ENCODE measurements at regions of chr7 and their contacts with region 1.

Region 1: GRCh38 chr7:79837915-79838314 is 296.7 kb upstream of the GNAI1 start:
- DNase-seq: no peak
- H3K4me3 Mint-ChIP-seq: no peak overlapping the region
- H3K27ac Mint-ChIP-seq: no peak overlapping the region
- H3K4me1 Mint-ChIP-seq: no peaks in the 10 kb centered on the region
- H3K27me3 Mint-ChIP-seq: no peaks in the 10 kb centered on the region

Region 2: DNA sequence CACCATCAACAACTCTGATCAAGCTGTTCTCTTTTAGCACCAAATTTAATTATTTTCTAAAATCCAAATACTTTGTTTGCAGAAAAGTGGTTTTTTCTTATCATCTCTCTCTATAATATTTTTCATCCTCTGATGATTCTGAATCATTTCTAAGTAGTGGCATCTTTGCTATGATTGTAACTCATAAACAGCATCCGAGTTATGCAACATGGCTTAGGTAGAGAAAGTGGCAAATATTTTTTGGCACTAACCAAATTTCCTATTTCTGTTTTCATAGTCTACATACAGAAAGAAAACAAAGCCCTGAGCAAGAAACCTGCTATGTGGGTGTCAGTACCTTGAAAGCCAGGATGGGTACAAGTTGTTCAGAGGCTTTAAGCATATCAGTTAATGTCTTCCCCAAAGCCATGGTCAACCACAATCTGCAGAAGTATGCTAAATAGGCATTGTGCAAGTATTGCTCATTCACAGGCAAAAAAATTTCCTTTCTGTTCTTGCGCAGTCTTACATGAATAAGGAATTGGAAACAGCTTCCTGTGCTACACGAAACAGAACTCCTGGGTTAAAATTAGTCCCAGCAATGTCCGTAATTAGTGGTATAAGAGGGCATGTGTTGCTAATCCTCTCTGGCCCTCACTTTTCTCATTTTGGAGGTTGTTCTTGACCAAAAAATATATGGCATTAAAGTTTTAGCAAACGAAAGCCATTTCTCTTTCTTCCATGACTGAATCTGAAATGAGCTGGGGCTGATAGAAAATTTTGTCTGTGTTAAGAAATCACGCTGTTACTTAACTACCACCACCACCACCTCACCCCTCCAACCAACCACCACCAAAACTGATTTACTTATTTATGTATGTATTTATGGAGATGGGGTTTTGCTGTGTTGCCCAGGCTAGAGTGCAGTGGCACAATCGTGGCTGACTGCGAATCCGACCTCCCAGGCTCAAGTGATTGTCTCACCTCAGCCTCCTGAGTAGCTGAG is 58.8 kb before region 1 on chr7:
- intact Hi-C with region 1: no loop called
- DNase-seq: no peak
- H3K4me3 Mint-ChIP-seq: no peak overlapping the region
- H3K27ac Mint-ChIP-seq: no peak overlapping the region
- H3K4me1 Mint-ChIP-seq: no peaks in the 10 kb centered on the region
- H3K27me3 Mint-ChIP-seq: no peaks in the 10 kb centered on the region

Region 3: GRCh38 chr7:79854621-79855020 is 16.7 kb after region 1 on chr7:
- intact Hi-C with region 1: loop called (anchors 1 kb)
- DNase-seq: no peak
- H3K4me3 Mint-ChIP-seq: no peak overlapping the region
- H3K27ac Mint-ChIP-seq: no peak overlapping the region
- H3K4me1 Mint-ChIP-seq: no peaks in the 10 kb centered on the region
- H3K27me3 Mint-ChIP-seq: no peaks in the 10 kb centered on the region